ENCODE measurements at regions of chr2 and their contacts with region 1.

Region 1: DNA sequence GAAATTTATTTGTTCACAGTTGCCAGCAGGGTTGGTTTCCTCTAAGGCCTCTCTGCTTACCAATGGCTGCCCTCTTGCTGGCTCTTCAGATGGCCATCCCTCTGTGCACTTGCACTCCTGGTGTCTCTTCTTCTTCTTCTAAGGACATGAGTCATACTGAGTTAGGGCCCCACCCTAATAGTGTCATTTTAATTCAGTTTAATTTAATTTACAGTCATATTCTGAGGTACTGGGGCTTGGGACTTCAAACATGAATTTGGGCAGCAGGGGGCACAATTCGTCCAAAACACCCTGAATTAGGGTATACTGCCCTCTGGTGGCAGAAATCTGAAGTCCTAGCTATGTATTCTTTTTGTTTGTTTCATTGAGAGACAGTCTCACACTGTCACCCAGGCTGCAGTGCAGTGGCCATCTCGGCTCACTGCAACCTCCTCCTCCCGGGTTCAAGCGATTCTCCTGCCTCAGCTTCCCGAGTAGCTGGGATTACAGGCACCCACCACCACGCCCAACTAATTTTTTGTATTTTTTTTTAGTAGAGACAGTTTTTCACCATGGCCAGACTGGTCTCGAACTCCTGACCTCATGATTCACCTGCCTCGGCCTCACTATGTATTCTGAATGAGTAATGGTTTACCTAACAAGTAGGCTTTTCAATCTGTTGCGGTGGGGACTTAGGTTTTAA is 19.8 kb downstream of the SLC4A1AP start:
- DNase-seq: peak; percentile 91
- ATAC-seq: peak; percentile 90
- H3K4me3 ChIP-seq: no peak overlapping the region
- H3K4me3 Mint-ChIP-seq: no peak overlapping the region
- H3K27ac ChIP-seq: no peak overlapping the region
- H3K27ac Mint-ChIP-seq: peak overlapping the region; percentile 59
- H3K4me1 ChIP-seq: no peaks in the 10 kb centered on the region
- H3K4me1 Mint-ChIP-seq: peaks cover 5% of the 10 kb centered on the region
- H3K27me3 ChIP-seq: no peaks in the 10 kb centered on the region
- H3K27me3 Mint-ChIP-seq: no peaks in the 10 kb centered on the region
- CTCF ChIP-seq: peak; percentile 100

Region 2: DNA sequence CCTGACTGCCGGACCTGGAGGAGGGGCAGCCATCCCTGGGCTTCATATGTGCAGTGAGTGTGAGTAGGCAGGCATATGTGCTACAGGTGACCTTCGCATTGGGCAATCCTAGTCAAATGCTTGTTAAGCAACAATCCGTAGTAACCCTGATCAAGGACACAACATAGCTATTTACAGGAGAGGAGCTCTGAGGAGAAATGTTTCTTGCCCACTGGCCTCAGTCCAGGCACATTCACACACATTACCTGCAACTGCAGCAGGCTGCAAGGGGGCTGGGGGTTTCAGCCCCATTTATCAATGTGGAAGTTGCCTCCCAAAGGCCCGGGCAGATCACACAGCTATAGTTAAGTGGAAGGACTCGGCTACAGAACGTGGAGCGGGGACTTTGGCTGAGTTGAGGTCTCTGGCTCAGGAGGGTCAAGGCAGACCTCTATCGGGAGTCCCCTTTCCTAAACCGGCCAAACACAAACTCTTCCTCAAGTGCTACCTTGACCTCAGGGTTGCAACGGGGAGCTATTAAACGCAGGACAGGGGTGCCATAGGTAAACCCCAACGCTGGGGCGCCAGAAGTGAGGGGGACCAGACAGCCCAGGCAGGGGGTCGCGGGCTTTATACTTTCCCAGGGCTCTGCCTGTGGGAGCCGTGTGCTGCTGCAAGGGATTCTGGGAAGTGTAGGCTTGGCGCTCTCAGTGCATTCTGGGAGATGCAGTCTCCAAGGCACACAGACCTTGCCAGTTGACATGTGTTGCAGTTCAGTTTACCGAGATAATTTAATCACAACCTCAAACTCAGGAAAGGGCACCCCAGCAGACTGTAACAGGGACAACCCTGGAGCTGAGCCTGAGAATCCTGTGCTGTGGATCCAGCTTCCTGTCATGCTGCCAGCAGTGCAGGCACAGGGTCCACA is 587.5 kb before region 1 on chr2:
- CTCF ChIA-PET with region 1: no interaction called
- POLR2A ChIA-PET with region 1: no interaction called
- intact Hi-C with region 1: loop called (anchors 5 kb)
- DNase-seq: peak; percentile 67
- ATAC-seq: peak; percentile 90
- H3K4me3 ChIP-seq: peak overlapping the region in 3 of 5 experiments; percentile 38 to 55 (median 48)
- H3K4me3 Mint-ChIP-seq: peak overlapping the region; percentile 81
- H3K27ac ChIP-seq: no peak overlapping the region
- H3K27ac Mint-ChIP-seq: peak overlapping the region; percentile 41
- H3K4me1 ChIP-seq: peaks cover 6 to 9% of the 10 kb centered on the region in 2 donors
- H3K4me1 Mint-ChIP-seq: peaks cover 11% of the 10 kb centered on the region
- H3K27me3 ChIP-seq: no peaks in the 10 kb centered on the region
- H3K27me3 Mint-ChIP-seq: no peaks in the 10 kb centered on the region
- CTCF ChIP-seq: no peak

Region 3: GRCh38 chr2:27441958-27442919 is 241.3 kb before region 1 on chr2 and contains the start of gene KRTCAP3:
- CTCF ChIA-PET with region 1: no interaction called
- POLR2A ChIA-PET with region 1: no interaction called
- intact Hi-C with region 1: loop called (anchors 10 kb)
- DNase-seq: peak; percentile 70
- ATAC-seq: peak; percentile 98
- H3K4me3 ChIP-seq: peak within 1 kb of the TSS in 3 of 5 experiments; percentile 19 to 37 (median 27)
- H3K4me3 Mint-ChIP-seq: peak within 1 kb of the TSS; percentile 72
- H3K27ac ChIP-seq: no peak within 1 kb of the TSS
- H3K27ac Mint-ChIP-seq: peak within 1 kb of the TSS; percentile 72
- H3K4me1 ChIP-seq: peaks cover 3 to 6% of the 10 kb centered on the region in 2 donors
- H3K4me1 Mint-ChIP-seq: peaks cover 12% of the 10 kb centered on the region
- H3K27me3 ChIP-seq: no peaks in the 10 kb centered on the region
- H3K27me3 Mint-ChIP-seq: no peaks in the 10 kb centered on the region
- CTCF ChIP-seq: peak; percentile 58
- total RNA-seq, gene KRTCAP3: 15.0 and 16.5 TPM in 2 replicates

Region 4: GRCh38 chr2:27628767-27629709 is 54.5 kb before region 1 on chr2 and contains the starts of genes CCDC121 and GPN1:
- CTCF ChIA-PET with region 1: interaction called, 6 read pairs
- POLR2A ChIA-PET with region 1: no interaction called
- intact Hi-C with region 1: loop called (anchors 2 kb)
- DNase-seq: peak; percentile 94
- ATAC-seq: peak; percentile 100
- H3K4me3 ChIP-seq: peak within 1 kb of the TSS; percentile 83 to 98 (median 91)
- H3K4me3 Mint-ChIP-seq: no peak within 1 kb of the TSS
- H3K27ac ChIP-seq: peak within 1 kb of the TSS; percentile 70 to 83
- H3K27ac Mint-ChIP-seq: peak within 1 kb of the TSS; percentile 51
- H3K4me1 ChIP-seq: peaks cover 10 to 17% of the 10 kb centered on the region in 2 donors
- H3K4me1 Mint-ChIP-seq: peaks cover 24% of the 10 kb centered on the region
- H3K27me3 ChIP-seq: no peaks in the 10 kb centered on the region
- H3K27me3 Mint-ChIP-seq: no peaks in the 10 kb centered on the region
- CTCF ChIP-seq: no peak
- total RNA-seq, gene CCDC121: 1.3 and 2.2 TPM in 2 replicates
- total RNA-seq, gene GPN1: 26.0 and 27.8 TPM in 2 replicates

Region 5: DNA sequence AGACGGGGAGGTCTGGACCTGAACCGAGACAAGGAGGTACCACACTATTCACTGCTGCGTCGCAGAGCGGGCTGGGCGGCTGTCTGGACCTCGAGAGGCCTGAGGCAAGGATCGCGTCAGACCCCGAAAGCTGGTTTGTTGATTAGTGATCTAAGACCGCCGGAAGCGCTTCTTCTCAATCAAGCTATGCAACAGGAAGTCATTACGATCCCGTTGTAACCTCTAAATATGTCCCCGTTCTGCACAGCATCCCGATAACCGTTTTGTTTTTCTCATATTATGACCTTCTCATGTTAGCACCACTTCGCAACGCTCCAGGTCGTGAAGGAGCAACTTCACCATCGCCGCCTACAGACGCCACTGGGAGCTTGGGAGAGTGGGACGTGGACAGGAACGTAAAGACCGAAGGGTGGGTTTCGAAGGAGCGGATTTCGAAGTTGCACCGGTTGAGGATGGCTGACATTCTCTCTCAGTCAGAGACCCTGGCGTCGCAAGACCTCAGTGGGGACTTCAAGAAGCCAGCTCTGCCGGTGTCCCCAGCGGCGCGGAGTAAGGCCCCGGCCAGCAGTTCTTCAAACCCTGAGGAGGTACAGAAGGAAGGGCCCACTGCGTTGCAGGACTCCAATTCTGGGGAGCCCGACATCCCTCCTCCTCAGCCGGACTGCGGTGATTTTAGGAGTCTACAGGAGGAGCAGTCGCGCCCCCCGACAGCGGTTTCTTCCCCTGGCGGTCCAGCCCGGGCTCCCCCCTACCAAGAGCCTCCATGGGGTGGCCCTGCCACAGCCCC is 19.9 kb before region 1 on chr2 and contains the starts of genes SLC4A1AP and SUPT7L:
- CTCF ChIA-PET with region 1: interaction called, 52 read pairs
- POLR2A ChIA-PET with region 1: no interaction called
- intact Hi-C with region 1: loop called (anchors 2 kb)
- DNase-seq: peak; percentile 94
- ATAC-seq: peak; percentile 80
- H3K4me3 ChIP-seq: peak within 1 kb of the TSS; percentile 75 to 100 (median 97)
- H3K4me3 Mint-ChIP-seq: peak within 1 kb of the TSS; percentile 99
- H3K27ac ChIP-seq: peak within 1 kb of the TSS; percentile 75 to 99
- H3K27ac Mint-ChIP-seq: peak within 1 kb of the TSS; percentile 99
- H3K4me1 ChIP-seq: peaks cover 19 to 23% of the 10 kb centered on the region in 2 donors
- H3K4me1 Mint-ChIP-seq: peaks cover 42% of the 10 kb centered on the region
- H3K27me3 ChIP-seq: no peaks in the 10 kb centered on the region
- H3K27me3 Mint-ChIP-seq: no peaks in the 10 kb centered on the region
- CTCF ChIP-seq: no peak
- total RNA-seq, gene SLC4A1AP: 23.1 and 25.6 TPM in 2 replicates
- total RNA-seq, gene SUPT7L: 40.2 and 40.7 TPM in 2 replicates

Region 6: DNA sequence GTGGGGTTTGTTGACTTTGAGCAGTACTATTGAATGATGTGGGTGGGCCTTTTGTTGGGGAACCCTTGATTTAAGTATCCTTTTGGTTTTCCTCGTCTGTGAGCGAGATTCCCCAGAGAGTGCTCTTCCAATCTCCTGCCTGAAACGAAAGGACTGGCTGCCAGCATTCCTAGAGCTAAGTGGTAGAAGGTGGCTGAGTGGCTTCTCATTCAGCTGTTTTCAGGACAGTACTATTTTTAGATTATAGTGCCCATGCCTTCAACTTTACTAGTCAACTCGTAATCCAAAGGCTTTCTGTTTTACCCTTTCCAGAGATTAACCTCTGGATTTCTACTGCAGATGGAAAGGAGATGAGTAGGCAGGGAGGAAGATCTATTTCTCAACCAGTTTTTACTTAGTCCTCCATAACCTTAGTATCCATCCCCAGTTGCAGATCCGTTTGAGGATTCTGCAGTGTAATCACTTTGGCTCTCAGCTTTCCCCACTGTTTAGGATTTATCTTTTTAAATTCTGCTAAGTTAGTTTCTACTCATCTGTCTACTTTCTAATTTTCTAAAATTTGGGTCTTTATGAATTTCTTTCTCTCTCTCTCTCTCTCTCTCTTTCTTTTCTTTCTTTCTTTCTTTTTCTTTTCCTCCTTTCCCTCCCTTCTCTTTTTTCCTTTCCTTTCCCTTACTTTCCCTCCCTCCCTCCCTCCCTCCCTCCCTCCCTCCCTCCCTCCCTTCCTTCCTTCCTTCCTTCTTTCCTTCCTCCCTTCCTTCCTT is 10.6 kb before region 1 on chr2:
- CTCF ChIA-PET with region 1: interaction called, 52 read pairs
- POLR2A ChIA-PET with region 1: interaction called, 4 read pairs
- intact Hi-C with region 1: no loop called
- DNase-seq: no peak
- ATAC-seq: no peak
- H3K4me3 ChIP-seq: no peak overlapping the region
- H3K4me3 Mint-ChIP-seq: no peak overlapping the region
- H3K27ac ChIP-seq: no peak overlapping the region
- H3K27ac Mint-ChIP-seq: no peak overlapping the region
- H3K4me1 ChIP-seq: no peaks in the 10 kb centered on the region
- H3K4me1 Mint-ChIP-seq: no peaks in the 10 kb centered on the region
- H3K27me3 ChIP-seq: no peaks in the 10 kb centered on the region
- H3K27me3 Mint-ChIP-seq: no peaks in the 10 kb centered on the region
- CTCF ChIP-seq: no peak

Region 7: GRCh38 chr2:27723372-27724144 is 40.0 kb after region 1 on chr2:
- CTCF ChIA-PET with region 1: no interaction called
- POLR2A ChIA-PET with region 1: no interaction called
- intact Hi-C with region 1: no loop called
- DNase-seq: peak; percentile 29
- ATAC-seq: peak; percentile 51
- H3K4me3 ChIP-seq: no peak overlapping the region
- H3K4me3 Mint-ChIP-seq: no peak overlapping the region
- H3K27ac ChIP-seq: no peak overlapping the region
- H3K27ac Mint-ChIP-seq: no peak overlapping the region
- H3K4me1 ChIP-seq: no peaks in the 10 kb centered on the region
- H3K4me1 Mint-ChIP-seq: no peaks in the 10 kb centered on the region
- H3K27me3 ChIP-seq: peaks cover 0 to 6% (median 1%) of the 10 kb centered on the region in 4 experiments
- H3K27me3 Mint-ChIP-seq: peaks cover 8% of the 10 kb centered on the region
- CTCF ChIP-seq: peak; percentile 64

Measured in B cell (primary cell).